SK-N-SH (cell line): ENCODE measurements at regions of chr16 and their contacts with region 1.

Region 1: DNA sequence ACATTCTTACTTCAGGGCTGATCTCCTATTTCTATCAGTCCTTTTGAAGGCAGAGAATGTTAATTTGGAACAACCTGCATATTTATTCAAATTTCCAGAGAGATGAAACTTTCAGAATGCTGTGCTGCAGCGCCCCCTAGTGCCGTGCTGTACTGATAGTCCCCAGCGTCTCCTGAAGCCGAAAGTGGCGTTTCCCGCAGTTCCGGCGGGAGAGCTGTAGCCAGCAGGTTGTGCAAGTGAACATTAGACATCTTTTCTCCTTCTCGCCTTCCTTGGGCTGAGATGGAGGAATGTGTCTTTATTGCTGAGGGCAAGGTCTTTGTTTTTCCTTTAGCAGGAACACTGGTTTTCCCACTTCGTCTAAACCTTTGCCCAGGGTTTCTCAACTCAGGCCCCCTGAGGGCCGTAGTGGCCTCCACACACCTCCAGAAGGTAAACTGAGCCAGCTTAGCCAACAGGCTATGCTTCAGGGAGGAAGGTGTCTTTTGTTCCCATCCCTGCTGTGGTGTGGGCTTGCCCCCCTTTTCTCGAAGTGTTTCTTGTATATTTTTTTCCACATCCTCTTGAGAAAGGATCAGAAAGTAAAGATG is 26.4 kb downstream of the USP10 start:
- DNase-seq: peak; percentile 68
- H3K4me3 ChIP-seq: peak overlapping the region in 1 of 2 experiments; percentile 45; a peak in 1 of 4 replicates
- H3K27ac ChIP-seq: no peak overlapping the region
- H3K4me1 ChIP-seq: peaks cover 28 to 34% of the 10 kb centered on the region in 2 experiments; a peak in 3 of 4 replicates
- H3K27me3 ChIP-seq: no peaks in the 10 kb centered on the region
- CTCF ChIP-seq: peak; percentile 97
- EP300 ChIP-seq: no peak
- RAD21 ChIP-seq: peak; percentile 88

Region 2: DNA sequence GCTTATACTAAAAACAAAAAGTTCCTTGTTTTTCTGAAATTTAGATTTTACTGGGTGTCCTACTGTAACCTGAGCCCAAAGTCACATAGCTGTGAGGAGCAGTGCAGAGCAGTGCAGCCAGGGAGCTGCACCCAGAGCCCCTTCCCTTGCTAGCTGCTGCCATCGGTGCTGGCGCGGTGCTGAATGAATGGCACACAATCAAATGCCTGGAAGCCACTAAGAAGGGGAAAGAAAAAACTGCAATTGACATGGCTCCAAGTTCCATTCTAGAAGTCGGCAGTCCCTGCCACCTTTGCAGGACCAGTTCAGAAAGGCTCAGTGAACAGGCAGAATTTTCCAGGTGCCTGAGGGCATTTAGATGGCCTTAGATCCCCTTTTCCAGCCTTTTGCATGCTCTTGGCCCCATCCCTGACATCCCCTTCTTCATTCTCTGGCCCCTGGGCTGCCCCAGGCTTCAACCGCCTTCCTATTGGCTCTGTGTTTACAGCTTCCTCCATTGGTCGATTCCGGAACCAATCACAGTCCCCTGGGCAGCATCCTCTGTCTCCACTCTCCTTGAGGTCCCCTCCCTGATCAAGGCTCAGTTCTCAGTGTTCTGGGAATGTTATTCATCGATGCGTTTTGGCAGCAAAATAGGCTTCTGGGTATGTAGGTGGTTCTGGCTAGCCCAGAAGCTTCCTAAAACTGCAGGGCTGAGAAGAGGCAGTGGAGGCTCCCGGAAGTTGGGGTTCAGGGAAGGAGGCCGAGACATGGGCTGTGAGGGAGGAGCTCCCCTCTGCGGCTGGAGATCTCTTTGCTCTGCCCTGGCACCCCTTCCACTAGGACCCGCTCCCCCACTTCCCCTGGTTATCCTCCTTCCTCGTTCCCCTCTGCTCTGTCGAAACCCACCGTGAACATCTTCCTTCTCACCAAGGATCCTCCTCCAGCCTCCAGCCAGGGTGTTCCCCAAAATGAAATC is 319.9 kb before region 1 on chr16:
- CTCF ChIA-PET with region 1: no interaction called
- POLR2A ChIA-PET with region 1: no interaction called
- DNase-seq: peak; percentile 78
- H3K4me3 ChIP-seq: peak overlapping the region; percentile 8 to 23; a peak in 3 of 4 replicates
- H3K27ac ChIP-seq: no peak overlapping the region
- H3K4me1 ChIP-seq: peaks cover 0 to 5% of the 10 kb centered on the region in 2 experiments; a peak in 1 of 4 replicates
- H3K27me3 ChIP-seq: peaks cover 13% of the 10 kb centered on the region; the same call in 1 of the 2 replicates
- CTCF ChIP-seq: no peak
- EP300 ChIP-seq: no peak
- RAD21 ChIP-seq: no peak

Region 3: DNA sequence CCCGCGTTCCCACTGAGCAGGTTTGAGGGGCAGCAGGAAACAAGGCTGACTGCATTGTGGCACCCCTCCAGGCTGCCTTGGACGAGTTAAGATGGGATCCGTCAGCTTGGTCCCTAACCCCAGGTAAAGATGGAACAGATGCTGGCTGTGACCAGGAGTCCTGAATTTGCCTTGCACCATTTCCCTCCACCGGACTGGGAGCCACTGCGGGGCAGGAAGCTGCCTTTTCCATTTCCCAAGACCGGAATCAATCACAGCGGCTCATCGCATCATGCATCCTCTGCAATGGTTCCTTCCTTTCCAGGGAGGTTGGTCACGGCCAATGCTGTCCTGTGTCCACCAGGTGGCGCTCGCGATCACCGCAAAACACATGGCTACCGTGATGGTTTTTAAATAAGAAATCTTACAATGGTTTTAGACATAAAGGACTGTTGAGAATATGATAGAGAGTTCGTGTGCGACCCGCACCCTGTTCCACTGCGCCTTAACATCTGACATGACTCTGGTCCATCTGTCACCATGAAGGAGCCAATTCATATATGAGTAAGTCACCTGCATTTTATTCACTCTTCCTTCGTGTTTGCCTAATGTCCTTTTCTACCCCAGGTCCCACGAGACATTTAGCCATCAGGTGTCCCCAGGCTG is 214.9 kb before region 1 on chr16:
- CTCF ChIA-PET with region 1: interaction called, 56 read pairs
- POLR2A ChIA-PET with region 1: no interaction called
- DNase-seq: peak; percentile 85
- H3K4me3 ChIP-seq: peak overlapping the region; percentile 23 to 26; a peak in 3 of 4 replicates
- H3K27ac ChIP-seq: no peak overlapping the region
- H3K4me1 ChIP-seq: peaks cover 0 to 8% of the 10 kb centered on the region in 2 experiments; a peak in 1 of 4 replicates
- H3K27me3 ChIP-seq: no peaks in the 10 kb centered on the region
- CTCF ChIP-seq: peak; percentile 95
- EP300 ChIP-seq: no peak
- RAD21 ChIP-seq: peak; percentile 91

Region 4: DNA sequence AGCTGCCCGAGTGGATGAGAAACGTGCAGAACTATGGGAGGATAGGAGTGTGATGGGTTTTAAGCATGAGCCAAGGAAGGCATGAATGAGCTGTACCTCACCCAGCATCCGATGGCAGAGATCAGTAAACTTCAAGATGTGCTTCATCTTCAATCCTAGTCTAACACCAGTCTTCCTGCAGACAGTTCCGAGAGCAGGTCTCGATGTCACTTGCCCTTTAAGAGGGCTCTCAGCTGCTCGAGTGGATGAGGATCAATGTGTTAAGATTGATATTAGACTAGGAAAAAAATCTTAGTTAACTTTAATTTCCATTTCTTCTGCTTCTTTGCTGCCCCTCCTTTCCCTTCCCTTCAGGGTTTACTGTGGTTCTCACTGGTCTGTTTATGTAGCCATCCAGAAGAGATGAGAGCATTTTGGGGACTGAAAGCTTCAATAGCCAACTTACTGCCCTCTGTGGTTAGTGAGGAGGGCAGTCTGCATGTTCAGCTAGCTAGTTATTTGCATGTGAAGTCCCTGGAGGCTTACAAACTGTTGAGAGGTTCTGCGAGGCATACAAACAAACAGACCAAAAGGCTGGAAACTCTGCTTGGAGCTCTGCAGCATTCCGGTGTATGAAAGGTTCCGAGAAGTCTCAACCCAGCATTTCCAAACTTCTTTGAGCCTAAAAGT is 62.6 kb before region 1 on chr16:
- CTCF ChIA-PET with region 1: interaction called, 137 read pairs
- POLR2A ChIA-PET with region 1: no interaction called
- DNase-seq: no peak
- H3K4me3 ChIP-seq: no peak overlapping the region
- H3K27ac ChIP-seq: no peak overlapping the region
- H3K4me1 ChIP-seq: peaks cover 0 to 16% of the 10 kb centered on the region in 2 experiments; a peak in 3 of 4 replicates
- H3K27me3 ChIP-seq: no peaks in the 10 kb centered on the region
- CTCF ChIP-seq: no peak
- EP300 ChIP-seq: no peak
- RAD21 ChIP-seq: no peak

Region 5: GRCh38 chr16:84687715-84688114 is 38.5 kb before region 1 on chr16:
- CTCF ChIA-PET with region 1: interaction called, 22 read pairs
- POLR2A ChIA-PET with region 1: no interaction called
- DNase-seq: no peak
- H3K4me3 ChIP-seq: no peak overlapping the region
- H3K27ac ChIP-seq: peak overlapping the region in 1 of 2 experiments; percentile 50; a peak in 2 of 4 replicates
- H3K4me1 ChIP-seq: no peaks in the 10 kb centered on the region; a peak in 1 of 4 replicates
- H3K27me3 ChIP-seq: no peaks in the 10 kb centered on the region
- CTCF ChIP-seq: no peak
- EP300 ChIP-seq: no peak
- RAD21 ChIP-seq: no peak

Region 6: GRCh38 chr16:84714028-84714427 is 12.1 kb before region 1 on chr16:
- CTCF ChIA-PET with region 1: interaction called, 28 read pairs
- POLR2A ChIA-PET with region 1: no interaction called
- DNase-seq: no peak
- H3K4me3 ChIP-seq: no peak overlapping the region
- H3K27ac ChIP-seq: no peak overlapping the region
- H3K4me1 ChIP-seq: peaks cover 3 to 4% of the 10 kb centered on the region in 2 experiments; a peak in 2 of 4 replicates
- H3K27me3 ChIP-seq: no peaks in the 10 kb centered on the region
- CTCF ChIP-seq: no peak
- EP300 ChIP-seq: no peak
- RAD21 ChIP-seq: no peak

Region 7: DNA sequence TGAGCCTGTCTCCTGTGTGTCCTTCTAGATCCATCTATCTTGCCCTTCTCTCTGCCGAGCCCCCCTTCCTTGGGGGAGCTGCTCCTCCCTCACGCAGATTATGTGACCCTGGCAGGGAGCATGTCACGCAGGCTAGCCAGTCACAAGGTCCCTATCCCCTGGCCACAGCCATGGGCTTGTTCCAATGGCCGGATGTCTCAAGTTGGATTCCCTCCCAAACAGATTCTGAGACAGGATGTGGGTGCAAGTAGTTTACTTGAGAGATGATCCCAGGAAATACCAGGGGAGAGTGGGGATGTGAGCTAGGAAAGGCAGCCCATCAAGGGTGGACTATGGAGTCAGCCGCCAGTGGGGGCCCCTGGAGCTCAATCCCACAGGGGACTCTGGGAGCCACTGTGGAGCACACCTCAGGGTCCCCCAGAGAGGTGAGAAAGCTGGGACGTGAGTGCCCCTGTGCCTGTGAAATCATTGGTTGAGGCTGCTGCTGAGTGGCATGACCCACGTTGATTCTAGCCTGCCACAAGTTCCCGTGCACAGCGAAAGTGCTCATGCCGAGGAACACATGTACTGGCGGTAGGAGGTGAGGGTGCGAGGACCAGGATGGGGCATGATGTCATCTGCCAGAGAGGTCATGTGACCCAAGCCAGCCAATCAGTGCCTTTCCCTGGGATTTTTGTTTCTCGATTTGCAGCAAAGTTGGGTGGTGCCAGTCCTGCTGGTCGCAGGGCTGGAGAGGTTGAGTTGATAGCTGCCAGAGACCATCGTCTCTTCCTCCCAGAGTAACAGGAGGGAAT is 87.2 kb after region 1 on chr16:
- CTCF ChIA-PET with region 1: no interaction called
- POLR2A ChIA-PET with region 1: no interaction called
- DNase-seq: no peak
- H3K4me3 ChIP-seq: no peak overlapping the region
- H3K27ac ChIP-seq: no peak overlapping the region
- H3K4me1 ChIP-seq: no peaks in the 10 kb centered on the region
- H3K27me3 ChIP-seq: no peaks in the 10 kb centered on the region; the same call in 1 of the 2 replicates
- CTCF ChIP-seq: no peak
- EP300 ChIP-seq: no peak
- RAD21 ChIP-seq: no peak